Right ventricle myocardium superior (tissue), 1 donor: ENCODE measurements at regions of chr15 and their contacts with region 1.

Region 1: DNA sequence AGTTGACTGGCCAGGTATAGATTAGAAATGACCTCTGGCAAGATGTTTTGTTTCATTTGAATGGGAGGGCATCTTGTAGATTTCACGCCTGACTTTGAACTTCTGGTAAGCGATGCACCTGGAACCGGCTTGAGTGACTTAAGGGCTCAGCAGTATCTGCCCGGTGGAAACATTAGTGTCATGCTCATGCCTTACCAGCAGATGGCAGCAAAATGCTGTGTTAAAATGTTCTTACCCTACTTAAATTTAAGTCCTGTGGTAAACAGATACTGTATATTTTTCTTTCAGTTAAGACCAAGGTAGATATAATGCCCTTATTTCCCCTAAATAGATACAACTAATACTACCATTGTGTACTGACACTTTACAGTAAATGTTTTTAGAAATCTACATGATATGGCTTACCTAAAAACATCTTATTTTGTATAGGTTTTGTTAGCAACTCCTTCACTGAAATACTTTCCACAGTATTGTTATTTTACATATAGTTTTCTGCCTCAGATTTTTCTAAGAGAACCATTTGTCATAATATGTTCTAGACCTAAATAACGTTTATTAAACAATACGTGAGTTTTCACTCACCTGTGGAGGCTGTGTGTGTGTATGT is 25.5 kb downstream of the ASB7 start:
- DNase-seq: no peak
- ATAC-seq: peak; percentile 89

Region 2: GRCh38 chr15:101008158-101009139 is 380.6 kb after region 1 on chr15:
- intact Hi-C with region 1: loop called (anchors 2 kb)
- DNase-seq: peak; percentile 89
- ATAC-seq: peak; percentile 88